ENCODE measurements at regions of chrX and their contacts with region 1.

Region 1: DNA sequence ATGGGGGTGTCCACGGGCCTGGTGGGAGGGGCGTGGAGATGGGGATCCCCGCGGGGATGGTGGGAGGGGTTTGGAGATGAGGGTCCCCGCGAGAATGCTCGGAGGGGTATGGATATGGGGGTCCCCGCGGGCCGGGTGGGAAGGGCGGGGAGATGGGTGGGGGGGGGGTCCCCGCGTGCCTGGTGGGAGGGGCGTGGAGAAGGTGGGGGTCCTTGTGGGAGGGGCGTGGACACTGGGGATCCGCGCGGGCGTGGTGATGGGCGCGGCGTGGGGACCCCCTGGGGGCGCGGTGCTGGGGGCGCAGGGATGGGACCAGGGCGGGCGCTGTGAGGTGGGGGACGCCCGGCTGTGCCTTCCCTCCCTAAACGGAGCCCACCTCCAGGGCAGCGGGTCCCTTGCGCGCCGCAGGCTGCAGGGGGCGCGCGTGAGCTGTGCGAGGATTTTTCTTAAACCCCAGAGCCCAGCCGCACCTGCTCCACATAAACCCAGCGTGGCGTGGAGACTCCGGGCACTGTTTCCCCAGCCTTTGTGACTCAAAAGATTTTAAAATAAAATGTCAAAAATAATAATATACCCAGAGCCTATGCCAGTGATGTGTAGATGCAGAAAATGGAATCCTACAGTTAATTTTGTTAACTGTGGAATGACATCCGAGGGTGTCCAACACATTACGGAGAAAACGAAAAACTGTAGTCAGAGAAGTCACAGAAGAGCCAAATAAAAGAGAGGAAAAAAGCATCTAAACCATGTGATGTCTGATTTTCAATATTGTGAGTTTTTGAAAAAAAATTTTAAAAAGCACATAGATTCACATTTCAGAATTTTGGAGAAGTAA is 1.5 kb upstream of the ASMTL start:
- DNase-seq: peak; percentile 65 to 84 (median 72)
- H3K4me3 ChIP-seq: peak overlapping the region in 56 of 59 donors; percentile 19 to 91 (median 48)
- H3K27ac ChIP-seq: peak overlapping the region in 4 of 59 donors; percentile 18 to 65 (median 28)
- H3K27me3 ChIP-seq: peaks cover 0 to 4% (median 0%) of the 10 kb centered on the region in 45 donors
- CTCF ChIP-seq: peak; percentile 81 to 98 (median 94)

Region 2: GRCh38 chrX:1391707-1392375 is 62.3 kb before region 1 on chrX and contains the start of gene SLC25A6:
- intact Hi-C with region 1: loop called (anchors 5 to 10 kb)
- DNase-seq: peak; percentile 98 to 100 (median 99)
- H3K4me3 ChIP-seq: peak within 1 kb of the TSS; percentile 68 to 100 (median 99)
- H3K27ac ChIP-seq: peak within 1 kb of the TSS; percentile 73 to 100 (median 97)
- H3K27me3 ChIP-seq: no peaks in the 10 kb centered on the region
- CTCF ChIP-seq: peak in 9 of 56 donors; percentile 6 to 28 (median 15)
- total RNA-seq, gene SLC25A6: 158 to 287 (median 202) TPM

Region 3: GRCh38 chrX:1591102-1591900 is 137.1 kb after region 1 on chrX and contains the start of gene AKAP17A:
- intact Hi-C with region 1: loop called (anchors 2 to 5 kb)
- DNase-seq: peak; percentile 92 to 100 (median 96)
- H3K4me3 ChIP-seq: peak within 1 kb of the TSS; percentile 53 to 91 (median 75)
- H3K27ac ChIP-seq: peak within 1 kb of the TSS in 43 of 59 donors; percentile 7 to 86 (median 63)
- H3K27me3 ChIP-seq: no peaks in the 10 kb centered on the region
- CTCF ChIP-seq: peak in 47 of 56 donors; percentile 15 to 66 (median 45)
- total RNA-seq, gene AKAP17A: 16.7 to 45.7 (median 25.2) TPM

Region 4: DNA sequence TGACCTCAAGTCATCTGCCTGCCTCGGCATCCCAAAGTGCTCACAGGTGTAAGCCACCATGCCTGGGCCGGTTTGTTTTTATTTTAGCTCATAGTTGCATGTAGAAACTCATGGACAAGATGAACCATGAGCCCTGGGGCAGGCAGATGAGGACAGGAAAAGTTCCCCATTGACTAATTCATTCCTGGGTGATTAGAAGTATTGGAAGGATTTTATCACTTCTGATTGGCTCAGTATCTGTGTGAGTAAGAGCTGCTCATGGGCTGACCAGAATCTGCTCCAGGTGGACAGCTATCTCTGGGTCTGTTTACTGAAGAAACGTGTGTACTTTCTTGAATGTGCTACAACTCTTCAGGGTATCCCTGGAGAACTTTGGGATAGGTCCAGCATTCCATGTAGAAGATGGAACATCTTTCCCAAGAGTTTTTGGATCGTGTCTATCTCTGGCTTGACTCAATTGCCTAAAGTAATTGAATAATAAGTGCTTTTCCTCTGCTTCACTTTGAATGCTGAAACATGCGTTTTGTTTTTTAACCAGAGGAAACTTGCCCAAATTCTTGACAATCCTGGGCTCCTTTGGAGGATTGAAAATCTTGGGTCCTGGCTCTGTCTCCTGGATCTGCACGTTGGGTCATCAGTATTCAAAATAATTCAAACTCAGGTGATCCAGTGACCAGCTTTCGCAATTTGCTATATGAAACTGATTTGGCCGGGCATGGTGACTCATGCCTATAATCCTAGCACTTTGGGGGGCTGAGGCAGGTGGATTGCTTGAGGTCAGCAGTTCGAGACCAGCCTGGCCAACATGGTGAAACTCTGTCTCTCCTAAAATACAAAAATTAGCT is 1135.2 kb after region 1 on chrX:
- intact Hi-C with region 1: loop called (anchors 5 to 10 kb)
- DNase-seq: no peak
- H3K4me3 ChIP-seq: no peak overlapping the region
- H3K27ac ChIP-seq: no peak overlapping the region
- H3K27me3 ChIP-seq: peaks cover 0 to 52% (median 20%) of the 10 kb centered on the region in 45 donors
- CTCF ChIP-seq: no peak

Region 5: GRCh38 chrX:2595258-2595657 is 1141.1 kb after region 1 on chrX:
- intact Hi-C with region 1: loop called (anchors 5 to 10 kb)
- DNase-seq: no peak
- H3K4me3 ChIP-seq: no peak overlapping the region
- H3K27ac ChIP-seq: no peak overlapping the region
- H3K27me3 ChIP-seq: peaks cover 0 to 48% (median 4%) of the 10 kb centered on the region in 45 donors
- CTCF ChIP-seq: no peak

Measured in dorsolateral prefrontal cortex (tissue), 120 donors.